ENCODE measurements at regions of chr15 and their contacts with region 1.

Region 1: GRCh38 chr15:78596514-78596913 is 24.3 kb downstream of the CHRNA3 start:
- DNase-seq: no peak
- ATAC-seq: no peak
- H3K4me3 ChIP-seq: no peak overlapping the region
- H3K27ac ChIP-seq: no peak overlapping the region
- H3K4me1 ChIP-seq: no peaks in the 10 kb centered on the region
- H3K27me3 ChIP-seq: no peaks in the 10 kb centered on the region
- CTCF ChIP-seq: no peak
- POLR2A ChIP-seq: no peak
- RAD21 ChIP-seq: no peak

Region 2: GRCh38 chr15:78481917-78482316 is 114.6 kb before region 1 on chr15:
- CTCF ChIA-PET with region 1: no interaction called
- POLR2A ChIA-PET with region 1: no interaction called
- dilution Hi-C with region 1: no loop called
- in situ Hi-C with region 1: no loop called
- intact Hi-C with region 1: no loop called
- DNase-seq: no peak
- ATAC-seq: peak; percentile 11; the same call in 1 of the 2 replicates
- H3K4me3 ChIP-seq: no peak overlapping the region
- H3K27ac ChIP-seq: no peak overlapping the region
- H3K4me1 ChIP-seq: peaks cover 2% of the 10 kb centered on the region; the same call in 1 of the 2 replicates
- H3K27me3 ChIP-seq: no peaks in the 10 kb centered on the region
- CTCF ChIP-seq: no peak
- POLR2A ChIP-seq: no peak
- RAD21 ChIP-seq: no peak

Region 3: GRCh38 chr15:78685159-78685921 is 88.8 kb after region 1 on chr15:
- CTCF ChIA-PET with region 1: no interaction called
- POLR2A ChIA-PET with region 1: interaction called, 10 read pairs
- dilution Hi-C with region 1: no loop called
- in situ Hi-C with region 1: no loop called
- intact Hi-C with region 1: no loop called
- DNase-seq: no peak
- ATAC-seq: no peak
- H3K4me3 ChIP-seq: no peak overlapping the region
- H3K27ac ChIP-seq: no peak overlapping the region
- H3K4me1 ChIP-seq: no peaks in the 10 kb centered on the region
- H3K27me3 ChIP-seq: peaks cover 31% of the 10 kb centered on the region
- CTCF ChIP-seq: no peak
- POLR2A ChIP-seq: no peak
- RAD21 ChIP-seq: no peak

Region 4: GRCh38 chr15:78709263-78709882 is 112.9 kb after region 1 on chr15:
- CTCF ChIA-PET with region 1: no interaction called
- POLR2A ChIA-PET with region 1: no interaction called
- dilution Hi-C with region 1: no loop called
- in situ Hi-C with region 1: no loop called
- intact Hi-C with region 1: no loop called
- DNase-seq: peak; percentile 7
- ATAC-seq: peak; percentile 100
- H3K4me3 ChIP-seq: no peak overlapping the region
- H3K27ac ChIP-seq: no peak overlapping the region
- H3K4me1 ChIP-seq: no peaks in the 10 kb centered on the region; the same call in 1 of the 2 replicates
- H3K27me3 ChIP-seq: peaks cover 21% of the 10 kb centered on the region
- CTCF ChIP-seq: peak; percentile 77
- POLR2A ChIP-seq: no peak
- RAD21 ChIP-seq: peak; percentile 79